Transverse colon (tissue), 4 donors: ENCODE measurements at regions of chr5 and their contacts with region 1.

Region 1: DNA sequence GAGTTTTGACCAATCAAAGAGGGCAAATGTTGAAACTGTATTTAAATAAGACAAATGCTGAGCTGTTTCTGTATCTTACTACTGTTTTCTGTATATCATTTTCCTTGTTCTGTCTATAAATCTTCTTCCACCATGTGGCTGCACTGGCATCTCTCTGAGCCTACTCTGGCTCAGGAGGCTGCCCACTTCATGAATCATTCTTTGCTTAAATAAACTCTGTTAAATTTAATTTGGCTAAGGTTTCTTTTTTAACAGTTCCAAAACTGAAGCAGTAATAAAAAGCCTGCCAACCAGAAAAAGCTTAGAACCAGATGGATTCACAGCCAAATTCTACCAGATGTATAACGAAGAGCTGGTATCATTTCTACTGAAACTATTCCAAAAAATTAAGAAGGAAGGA is 40.2 kb upstream of the TAS2R1 start:
- DNase-seq: no peak
- H3K4me3 ChIP-seq: no peak overlapping the region
- H3K27ac ChIP-seq: no peak overlapping the region
- H3K4me1 ChIP-seq: no peaks in the 10 kb centered on the region
- H3K27me3 ChIP-seq: no peaks in the 10 kb centered on the region
- CTCF ChIP-seq: no peak
- EP300 ChIP-seq: no peak
- POLR2A ChIP-seq: no peak

Region 2: DNA sequence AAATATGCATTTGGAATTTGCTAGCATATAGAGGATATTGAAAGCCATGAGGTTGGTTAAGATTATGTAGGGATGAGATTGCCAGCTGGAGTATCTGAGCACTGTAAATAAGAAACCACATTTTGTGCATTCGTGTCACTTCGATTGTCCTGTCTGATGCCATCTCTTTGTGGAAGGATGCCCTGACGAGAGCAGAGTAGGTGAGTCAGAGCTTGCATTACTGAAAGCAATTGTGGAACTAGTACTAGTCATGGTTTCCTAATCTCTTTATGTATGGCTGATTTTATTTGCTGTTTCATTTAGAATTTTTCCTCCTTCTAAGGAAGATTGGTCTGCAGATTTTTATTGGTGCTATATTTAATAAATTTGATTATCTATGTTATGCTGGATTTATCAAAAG is 25.7 kb before region 1 on chr5:
- in situ Hi-C with region 1: no loop called
- intact Hi-C with region 1: loop called (anchors 1 kb)
- DNase-seq: no peak
- H3K4me3 ChIP-seq: no peak overlapping the region
- H3K27ac ChIP-seq: no peak overlapping the region
- H3K4me1 ChIP-seq: no peaks in the 10 kb centered on the region
- H3K27me3 ChIP-seq: no peaks in the 10 kb centered on the region
- CTCF ChIP-seq: no peak
- EP300 ChIP-seq: no peak
- POLR2A ChIP-seq: no peak

Region 3: DNA sequence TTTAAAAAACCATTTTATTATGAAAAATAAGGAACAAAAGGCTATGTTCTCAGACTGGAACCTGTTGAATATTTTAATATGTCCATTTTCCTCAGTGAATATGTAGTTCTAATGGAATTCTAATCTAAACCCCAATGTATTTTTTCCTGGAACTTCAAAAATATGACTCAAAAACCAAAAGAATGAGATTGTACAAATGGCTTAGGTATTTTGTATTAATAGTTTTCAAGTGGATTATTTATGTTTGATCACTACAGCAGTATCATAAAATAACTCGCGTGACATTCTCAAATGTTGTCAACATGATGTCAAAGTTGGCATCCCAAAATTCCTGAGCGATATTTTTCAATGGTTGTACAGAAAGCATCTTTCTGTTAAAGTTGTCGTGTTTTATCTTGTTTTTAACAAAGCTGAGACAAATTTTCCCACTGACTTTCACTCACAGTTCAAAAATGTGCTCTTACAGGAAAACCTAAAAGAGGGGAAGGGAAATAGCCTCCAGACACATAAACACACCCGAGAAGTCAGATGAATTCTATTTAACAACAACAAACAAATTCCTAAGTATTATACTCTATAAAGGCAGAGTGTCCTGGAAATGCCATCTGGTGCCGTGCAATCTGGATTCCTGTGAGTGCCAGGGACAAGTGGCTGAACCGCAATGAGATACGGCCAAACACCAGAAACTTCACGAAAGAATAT is 27.9 kb after region 1 on chr5:
- in situ Hi-C with region 1: no loop called
- intact Hi-C with region 1: no loop called
- DNase-seq: no peak
- H3K4me3 ChIP-seq: no peak overlapping the region
- H3K27ac ChIP-seq: no peak overlapping the region
- H3K4me1 ChIP-seq: no peaks in the 10 kb centered on the region
- H3K27me3 ChIP-seq: no peaks in the 10 kb centered on the region
- CTCF ChIP-seq: no peak
- EP300 ChIP-seq: no peak
- POLR2A ChIP-seq: no peak